ENCODE measurements at regions of chr2 and their contacts with region 1.

Region 1: DNA sequence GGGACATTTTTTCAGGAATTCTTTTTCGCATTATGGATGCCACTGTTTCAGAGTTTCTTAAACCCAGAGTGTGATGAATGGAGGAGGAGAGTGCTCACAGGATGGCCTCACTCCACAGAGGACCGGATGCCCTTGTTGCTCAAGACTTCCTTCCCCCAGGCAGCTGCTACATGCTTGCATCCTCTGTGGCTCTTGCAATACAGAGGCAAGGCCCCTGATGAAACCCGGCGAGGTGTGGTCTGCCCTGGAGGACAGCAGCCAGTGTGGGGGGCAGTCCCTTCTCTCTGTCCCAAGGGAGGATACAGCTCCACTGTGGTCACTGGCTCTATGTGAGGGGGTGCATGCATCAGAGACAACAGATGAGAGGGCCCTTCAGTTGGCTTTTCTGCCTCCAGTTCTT is 109.6 kb downstream of the SH3RF3 start:
- DNase-seq: peak; percentile 54
- ATAC-seq: peak; percentile 94
- H3K4me3 Mint-ChIP-seq: no peak overlapping the region
- H3K27ac Mint-ChIP-seq: peak overlapping the region; percentile 27
- H3K4me1 Mint-ChIP-seq: peaks cover 16% of the 10 kb centered on the region
- H3K27me3 Mint-ChIP-seq: no peaks in the 10 kb centered on the region

Region 2: DNA sequence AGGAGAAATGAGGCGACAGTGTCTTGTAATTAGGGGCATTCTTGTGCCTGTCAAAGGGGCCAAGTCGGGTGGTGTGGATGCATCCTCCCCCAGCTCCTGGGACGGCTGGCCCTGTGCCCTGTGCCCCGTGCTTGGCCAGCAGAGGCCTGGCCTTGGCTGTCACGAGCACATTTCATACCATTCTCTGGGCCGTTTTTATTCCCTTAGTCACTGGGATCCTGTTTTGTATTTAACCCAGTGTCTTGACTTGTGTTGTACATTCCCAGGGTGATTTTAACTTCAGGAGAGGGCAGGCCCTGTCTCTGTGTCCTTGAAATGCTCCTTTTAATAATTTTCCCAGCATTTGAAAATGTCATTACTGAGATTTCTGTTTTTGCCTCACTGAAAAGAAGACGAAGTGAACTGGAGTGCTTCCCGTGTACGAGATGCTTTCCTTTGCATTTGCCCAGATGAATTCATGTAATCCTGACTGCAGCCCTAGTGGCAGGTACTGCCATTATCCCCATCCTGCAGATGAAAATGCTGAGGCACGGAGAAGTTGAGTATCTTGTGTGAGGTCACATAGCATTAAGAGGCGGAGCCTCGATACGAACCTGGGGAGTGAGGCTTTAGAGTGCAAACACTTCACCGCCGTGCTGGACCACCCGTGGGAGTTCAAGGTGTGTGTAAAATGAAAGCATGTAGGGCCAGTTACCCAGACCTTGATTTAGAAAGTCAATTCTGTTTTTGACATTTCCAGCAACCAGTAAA is 52.6 kb before region 1 on chr2:
- CTCF ChIA-PET with region 1: no interaction called
- POLR2A ChIA-PET with region 1: no interaction called
- intact Hi-C with region 1: loop called in 1 of 2 experiments (anchors 5 kb)
- DNase-seq: no peak
- ATAC-seq: no peak
- H3K4me3 Mint-ChIP-seq: no peak overlapping the region
- H3K27ac Mint-ChIP-seq: no peak overlapping the region
- H3K4me1 Mint-ChIP-seq: peaks cover 3% of the 10 kb centered on the region
- H3K27me3 Mint-ChIP-seq: no peaks in the 10 kb centered on the region

Measured in activated CD4-positive, alpha-beta T cell treated with anti-CD3 and anti-CD28 coated beads for 36 hours (primary cell).